Panc1 (cell line): ENCODE measurements at regions of chr19 and their contacts with region 1.

Region 1: DNA sequence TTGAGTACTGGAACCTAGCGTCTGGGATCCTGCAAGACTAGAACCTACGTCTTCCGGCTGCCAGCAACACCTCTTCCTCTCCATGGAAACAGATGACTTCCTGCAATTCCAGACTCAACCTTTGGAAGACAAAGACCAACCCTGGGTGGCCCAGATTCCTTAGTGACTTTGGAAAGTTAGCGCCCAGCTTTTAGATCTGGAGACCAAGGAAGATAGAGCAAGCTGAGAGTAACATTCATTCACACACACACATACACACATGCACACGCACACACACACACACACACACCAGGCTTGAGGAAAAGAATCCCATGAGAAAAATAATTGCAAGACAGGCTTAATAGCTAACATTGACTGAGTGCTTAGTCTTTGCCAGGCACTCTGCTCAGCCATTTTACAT is 788.9 kb downstream of the UQCRFS1 start:
- DNase-seq: no peak
- ATAC-seq: no peak
- H3K4me3 ChIP-seq: no peak overlapping the region
- H3K27ac ChIP-seq: no peak overlapping the region
- H3K4me1 ChIP-seq: no peaks in the 10 kb centered on the region
- H3K27me3 ChIP-seq: no peaks in the 10 kb centered on the region; the same call in 1 of the 2 replicates
- CTCF ChIP-seq: no peak

Region 2: DNA sequence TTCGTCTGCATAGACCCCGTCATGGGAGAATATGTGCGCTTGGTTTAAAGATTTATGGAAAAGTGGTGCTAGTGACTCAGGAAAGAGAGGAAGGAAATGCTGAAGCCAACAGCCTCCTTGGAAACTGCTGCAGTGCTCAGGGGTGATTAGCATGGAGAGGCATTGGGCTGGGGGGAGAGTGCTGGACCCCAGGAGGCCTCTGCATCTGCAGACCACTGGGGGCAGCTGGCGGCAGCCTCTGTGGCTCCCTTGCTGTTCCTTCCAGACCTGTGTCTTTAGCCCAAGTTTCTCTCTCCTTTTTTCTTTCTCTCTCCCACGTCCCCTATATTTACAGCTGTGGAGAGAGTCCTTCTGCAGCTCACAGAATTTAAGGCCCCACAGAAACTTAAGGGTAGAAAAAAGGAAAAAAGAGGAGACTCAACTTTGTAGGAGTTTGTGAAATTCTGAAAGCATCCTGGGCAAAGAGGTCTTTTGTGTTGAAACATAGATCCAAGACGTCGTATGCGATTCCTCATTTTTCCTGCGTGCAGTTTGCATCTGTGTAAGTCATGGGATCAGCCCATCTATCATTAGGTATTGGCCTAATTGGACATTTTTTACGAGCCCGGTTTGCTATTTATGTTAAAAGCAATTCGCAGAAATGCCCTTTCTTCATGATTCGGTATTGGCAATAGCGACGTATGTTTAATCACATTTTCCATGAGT is 1831.9 kb after region 1 on chr19:
- CTCF ChIA-PET with region 1: no interaction called
- POLR2A ChIA-PET with region 1: interaction called, 12 read pairs
- in situ Hi-C with region 1: no loop called
- intact Hi-C with region 1: no loop called
- DNase-seq: no peak
- ATAC-seq: no peak
- H3K4me3 ChIP-seq: no peak overlapping the region
- H3K27ac ChIP-seq: no peak overlapping the region
- H3K4me1 ChIP-seq: no peaks in the 10 kb centered on the region
- H3K27me3 ChIP-seq: peaks cover 51% of the 10 kb centered on the region
- CTCF ChIP-seq: no peak